ENCODE measurements at regions of chr21 and their contacts with region 1.

Region 1: GRCh38 chr21:45287438-45288391 is at the start of gene POFUT2:
- DNase-seq: peak; percentile 100
- H3K4me3 Mint-ChIP-seq: peak within 1 kb of the TSS; percentile 86
- H3K27ac Mint-ChIP-seq: peak within 1 kb of the TSS; percentile 93
- H3K4me1 Mint-ChIP-seq: peaks cover 13% of the 10 kb centered on the region
- H3K27me3 Mint-ChIP-seq: peaks cover 4% of the 10 kb centered on the region
- total RNA-seq, gene POFUT2: 15.5 and 17.9 TPM in 2 replicates

Region 2: DNA sequence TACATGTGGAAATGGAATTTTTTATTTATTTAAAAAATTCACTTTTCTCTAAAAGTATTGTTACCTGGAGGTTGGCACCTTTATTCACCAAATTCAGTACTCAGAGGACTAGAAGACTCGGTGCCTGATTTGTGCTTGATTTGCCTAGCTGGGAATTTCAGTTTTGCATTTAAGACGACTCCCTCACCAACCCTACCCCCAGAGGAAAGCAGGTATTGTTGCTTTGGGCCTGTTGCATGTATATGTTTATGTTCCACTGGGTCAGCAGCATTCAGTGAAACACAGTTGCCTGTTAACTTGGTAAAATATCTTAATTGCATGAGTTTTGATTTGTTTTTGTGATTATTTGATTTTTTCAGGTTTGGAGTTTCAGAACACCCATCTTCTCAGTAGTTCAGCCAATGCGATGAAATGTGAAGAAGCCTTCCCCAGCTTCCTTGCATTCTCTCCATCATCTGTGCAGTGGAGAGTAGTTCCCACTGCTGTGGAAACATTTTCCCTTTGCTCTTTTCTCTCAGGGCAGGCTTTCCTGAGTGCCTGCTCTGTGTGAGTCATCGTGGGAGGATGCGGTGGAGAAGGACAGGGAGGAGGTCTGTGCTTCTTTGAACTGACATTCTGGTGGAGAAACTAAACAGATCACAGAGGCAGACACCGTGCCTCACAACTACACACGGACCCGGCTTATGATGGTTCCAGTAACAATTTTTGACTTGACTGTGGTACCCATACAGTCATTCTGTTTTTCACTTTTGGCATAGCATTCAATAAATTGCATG is 206.9 kb before region 1 on chr21:
- intact Hi-C with region 1: loop called (anchors 10 kb)
- DNase-seq: peak; percentile 83
- H3K4me3 Mint-ChIP-seq: peak overlapping the region; percentile 74
- H3K27ac Mint-ChIP-seq: peak overlapping the region; percentile 87
- H3K4me1 Mint-ChIP-seq: peaks cover 89% of the 10 kb centered on the region
- H3K27me3 Mint-ChIP-seq: no peaks in the 10 kb centered on the region

Region 3: GRCh38 chr21:45140346-45140940 is 147.3 kb before region 1 on chr21:
- intact Hi-C with region 1: loop called (anchors 1 kb)
- DNase-seq: peak; percentile 89
- H3K4me3 Mint-ChIP-seq: no peak overlapping the region
- H3K27ac Mint-ChIP-seq: no peak overlapping the region
- H3K4me1 Mint-ChIP-seq: peaks cover 14% of the 10 kb centered on the region
- H3K27me3 Mint-ChIP-seq: no peaks in the 10 kb centered on the region

Region 4: DNA sequence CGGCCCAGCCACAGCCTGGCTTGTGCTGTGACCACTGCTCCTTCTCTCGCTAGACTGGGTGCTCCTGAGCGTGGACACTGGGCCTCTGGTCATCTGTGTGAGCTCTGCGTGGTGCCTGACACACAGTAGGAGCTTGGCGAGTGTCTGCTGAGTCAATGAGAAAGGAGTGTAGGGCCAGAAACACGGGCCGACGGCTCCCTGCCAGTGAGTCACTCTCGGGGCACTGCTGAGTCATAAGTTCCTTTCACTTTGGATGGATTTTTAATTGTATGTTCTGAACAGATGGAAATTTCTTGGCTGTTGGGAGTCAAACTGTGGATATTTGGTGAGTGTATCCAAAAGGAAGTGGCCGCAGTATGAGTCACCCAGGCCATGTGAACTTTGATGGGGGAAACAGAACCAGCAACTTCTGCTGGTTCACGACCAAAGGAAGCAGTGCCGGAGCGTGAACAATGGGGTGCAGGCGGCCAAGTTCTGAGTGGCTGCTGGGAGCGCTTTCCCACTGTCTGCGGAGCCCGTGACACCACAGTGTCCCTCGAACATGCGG is 76.3 kb after region 1 on chr21:
- intact Hi-C with region 1: no loop called
- DNase-seq: peak; percentile 78
- H3K4me3 Mint-ChIP-seq: peak overlapping the region; percentile 8
- H3K27ac Mint-ChIP-seq: peak overlapping the region; percentile 47
- H3K4me1 Mint-ChIP-seq: peaks cover 6% of the 10 kb centered on the region
- H3K27me3 Mint-ChIP-seq: no peaks in the 10 kb centered on the region

Region 5: GRCh38 chr21:45439161-45439872 is 151.6 kb after region 1 on chr21:
- intact Hi-C with region 1: loop called (anchors 1 kb)
- DNase-seq: peak; percentile 95
- H3K4me3 Mint-ChIP-seq: peak overlapping the region; percentile 71
- H3K27ac Mint-ChIP-seq: no peak overlapping the region
- H3K4me1 Mint-ChIP-seq: no peaks in the 10 kb centered on the region
- H3K27me3 Mint-ChIP-seq: peaks cover 1% of the 10 kb centered on the region

Region 6: DNA sequence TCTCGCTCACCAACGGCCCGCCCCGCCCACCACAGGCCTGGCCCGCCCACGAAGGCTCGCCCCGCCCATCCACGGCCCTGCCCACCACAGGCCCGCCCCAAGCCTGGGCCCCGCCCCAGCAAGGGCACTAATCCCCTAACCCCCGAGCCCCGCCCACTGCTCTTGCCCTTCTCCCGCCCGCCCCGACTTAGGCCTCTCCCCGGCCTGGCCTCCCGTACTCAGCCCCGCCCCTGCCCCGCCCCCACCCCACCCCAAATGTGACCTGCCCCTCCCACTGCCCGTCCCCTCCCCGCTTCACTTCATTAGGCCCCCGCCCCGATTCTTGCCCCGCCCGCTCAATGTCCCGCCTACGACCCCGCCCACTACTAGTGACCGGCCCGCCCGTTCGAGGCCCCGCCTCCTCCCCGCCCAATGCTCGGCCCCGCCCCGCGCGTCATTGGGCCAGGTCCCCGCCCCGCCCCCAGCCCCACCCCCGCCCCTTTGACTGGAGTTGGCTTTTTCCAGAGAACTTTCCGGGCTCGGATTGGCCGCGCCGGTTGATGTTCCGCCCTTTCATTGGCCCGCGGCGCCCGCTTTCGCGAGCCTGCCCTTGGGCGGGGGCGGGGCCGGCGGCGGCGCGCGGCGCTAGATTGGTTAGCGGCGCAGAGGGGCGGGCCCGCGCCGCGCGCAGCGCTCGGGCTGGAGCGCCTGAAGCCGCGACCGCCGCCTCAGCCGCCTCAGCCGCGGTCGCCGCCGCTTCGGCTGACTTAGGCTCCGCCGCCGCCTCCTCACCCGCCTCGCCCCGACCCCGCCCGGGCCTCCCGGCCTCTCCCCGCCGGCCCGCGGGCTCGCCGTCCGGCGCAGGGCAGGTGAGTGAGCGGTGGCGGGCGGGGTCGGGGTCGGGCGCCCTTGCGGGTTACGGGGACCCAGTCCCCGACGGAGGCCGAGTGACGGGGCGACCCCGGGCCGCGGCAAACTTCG is 355.6 kb after region 1 on chr21 and contains the start of gene PCBP3:
- intact Hi-C with region 1: loop called (anchors 5 kb)
- DNase-seq: peak; percentile 98
- H3K4me3 Mint-ChIP-seq: peak within 1 kb of the TSS; percentile 82
- H3K27ac Mint-ChIP-seq: peak within 1 kb of the TSS; percentile 64
- H3K4me1 Mint-ChIP-seq: peaks cover 16% of the 10 kb centered on the region
- H3K27me3 Mint-ChIP-seq: peaks cover 11% of the 10 kb centered on the region
- total RNA-seq, gene PCBP3: 7.5 and 9.7 TPM in 2 replicates